A673 (cell line): ENCODE measurements at regions of chr13 and their contacts with region 1.

Region 1: GRCh38 chr13:60661521-60661920 is 264.5 kb downstream of the TDRD3 start:
- DNase-seq: peak; percentile 40
- H3K4me3 ChIP-seq: no peak overlapping the region
- H3K27ac ChIP-seq: no peak overlapping the region
- H3K4me1 ChIP-seq: no peaks in the 10 kb centered on the region
- H3K27me3 ChIP-seq: no peaks in the 10 kb centered on the region
- CTCF ChIP-seq: no peak

Region 2: GRCh38 chr13:60679928-60680694 is 18.6 kb after region 1 on chr13:
- CTCF ChIA-PET with region 1: no interaction called
- POLR2A ChIA-PET with region 1: interaction called, 15 read pairs
- intact Hi-C with region 1: no loop called
- DNase-seq: peak; percentile 75
- H3K4me3 ChIP-seq: no peak overlapping the region
- H3K27ac ChIP-seq: no peak overlapping the region
- H3K4me1 ChIP-seq: no peaks in the 10 kb centered on the region
- H3K27me3 ChIP-seq: no peaks in the 10 kb centered on the region
- CTCF ChIP-seq: no peak

Region 3: GRCh38 chr13:60759499-60759898 is 98.0 kb after region 1 on chr13:
- CTCF ChIA-PET with region 1: no interaction called
- POLR2A ChIA-PET with region 1: no interaction called
- intact Hi-C with region 1: loop called (anchors 5 kb)
- DNase-seq: peak; percentile 86
- H3K4me3 ChIP-seq: no peak overlapping the region
- H3K27ac ChIP-seq: no peak overlapping the region
- H3K4me1 ChIP-seq: peaks cover 38% of the 10 kb centered on the region
- H3K27me3 ChIP-seq: no peaks in the 10 kb centered on the region
- CTCF ChIP-seq: no peak